Panc1 (cell line): ENCODE measurements at regions of chr7 and their contacts with region 1.

Region 1: GRCh38 chr7:105118612-105119600 is 104.9 kb downstream of the KMT2E start:
- DNase-seq: no peak
- ATAC-seq: no peak
- H3K4me3 ChIP-seq: no peak overlapping the region
- H3K27ac ChIP-seq: no peak overlapping the region
- H3K4me1 ChIP-seq: no peaks in the 10 kb centered on the region; the same call in 1 of the 2 replicates
- H3K27me3 ChIP-seq: no peaks in the 10 kb centered on the region
- CTCF ChIP-seq: no peak

Region 2: GRCh38 chr7:105173586-105173985 is 54.7 kb after region 1 on chr7:
- CTCF ChIA-PET with region 1: no interaction called
- POLR2A ChIA-PET with region 1: no interaction called
- in situ Hi-C with region 1: no loop called
- intact Hi-C with region 1: no loop called
- DNase-seq: no peak
- ATAC-seq: no peak
- H3K4me3 ChIP-seq: no peak overlapping the region
- H3K27ac ChIP-seq: no peak overlapping the region
- H3K4me1 ChIP-seq: no peaks in the 10 kb centered on the region
- H3K27me3 ChIP-seq: no peaks in the 10 kb centered on the region
- CTCF ChIP-seq: no peak

Region 3: GRCh38 chr7:105399043-105399725 is 280.3 kb after region 1 on chr7:
- CTCF ChIA-PET with region 1: no interaction called
- POLR2A ChIA-PET with region 1: interaction called, 13 read pairs
- in situ Hi-C with region 1: no loop called
- intact Hi-C with region 1: no loop called
- DNase-seq: no peak
- ATAC-seq: no peak; the same call in 1 of the 2 replicates
- H3K4me3 ChIP-seq: no peak overlapping the region
- H3K27ac ChIP-seq: no peak overlapping the region
- H3K4me1 ChIP-seq: no peaks in the 10 kb centered on the region
- H3K27me3 ChIP-seq: no peaks in the 10 kb centered on the region
- CTCF ChIP-seq: no peak

Region 4: DNA sequence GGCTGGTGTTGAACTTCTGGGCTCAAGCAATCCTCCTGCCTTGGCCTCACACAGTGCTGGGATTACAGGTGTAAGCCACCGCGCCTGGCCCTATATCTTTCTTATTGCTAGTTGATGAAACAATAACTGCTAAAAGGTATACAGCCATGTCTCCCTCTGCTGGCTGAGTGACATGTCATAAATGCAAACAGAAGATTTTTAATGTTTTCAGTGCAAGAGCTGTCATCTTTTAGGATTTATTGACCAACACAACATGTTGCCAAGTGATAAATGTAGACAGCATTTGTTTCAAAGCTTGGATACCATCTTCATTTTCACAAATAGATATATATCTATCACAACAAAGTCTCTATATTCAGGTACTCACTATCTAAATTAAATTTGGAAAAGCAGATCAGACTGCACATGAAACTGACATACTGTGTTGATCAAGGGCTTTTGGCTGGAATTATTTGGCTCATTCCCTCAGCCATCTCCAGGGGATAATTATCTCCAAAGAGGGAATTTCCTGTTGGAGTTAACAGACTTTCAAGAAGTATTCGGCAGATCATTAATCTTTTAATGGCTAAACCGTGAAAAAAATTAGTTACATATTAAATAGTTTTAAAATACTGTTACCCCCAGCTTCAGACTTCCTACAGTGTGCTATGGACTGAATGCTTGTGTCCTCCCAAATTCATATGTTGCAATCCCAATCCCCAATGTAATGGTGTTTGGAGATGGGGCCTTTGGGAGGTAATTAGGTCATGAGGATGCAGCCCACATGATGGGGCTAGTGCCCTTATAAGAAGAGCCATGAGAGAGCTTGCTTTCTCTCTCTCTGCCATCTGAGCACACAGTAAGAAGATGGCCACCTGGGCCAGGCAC is 311.1 kb after region 1 on chr7:
- CTCF ChIA-PET with region 1: no interaction called
- POLR2A ChIA-PET with region 1: no interaction called
- in situ Hi-C with region 1: no loop called
- intact Hi-C with region 1: loop called (anchors 10 kb)
- DNase-seq: peak; percentile 55
- ATAC-seq: peak; percentile 88
- H3K4me3 ChIP-seq: no peak overlapping the region
- H3K27ac ChIP-seq: no peak overlapping the region
- H3K4me1 ChIP-seq: no peaks in the 10 kb centered on the region
- H3K27me3 ChIP-seq: no peaks in the 10 kb centered on the region
- CTCF ChIP-seq: peak; percentile 81